Activated CD4-positive, alpha-beta T cell treated with anti-CD3 and anti-CD28 coated beads, Interleukin-2, amount 10 ng/mL, durations not matched to agents 24 days and 14 days (primary cell): ENCODE measurements at regions of chr3 and their contacts with region 1.

Region 1: DNA sequence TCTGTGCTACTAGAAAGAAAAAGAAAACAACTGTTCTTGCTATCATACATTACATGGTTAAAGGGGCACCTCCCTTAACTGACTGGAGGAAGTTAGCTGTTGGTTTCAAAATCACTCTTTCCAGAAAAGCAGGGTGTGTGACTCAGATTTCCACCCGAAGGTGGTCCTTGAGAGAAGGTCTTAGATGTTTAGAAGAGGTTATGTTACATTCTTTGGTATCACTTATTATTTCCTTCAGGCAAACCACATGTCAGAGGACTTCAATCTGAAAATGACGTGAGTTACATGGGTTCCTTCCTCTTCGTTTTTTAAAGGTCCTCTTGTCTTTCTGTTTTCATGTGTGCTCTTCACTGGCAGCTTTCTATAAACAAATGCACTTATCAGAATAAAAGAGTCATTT is 307.9 kb upstream of the CBLB start:
- DNase-seq: peak; percentile 91
- H3K4me3 Mint-ChIP-seq: peak overlapping the region; percentile 77
- H3K27ac Mint-ChIP-seq: peak overlapping the region; percentile 93
- H3K4me1 Mint-ChIP-seq: peaks cover 53% of the 10 kb centered on the region
- H3K27me3 Mint-ChIP-seq: no peaks in the 10 kb centered on the region

Region 2: DNA sequence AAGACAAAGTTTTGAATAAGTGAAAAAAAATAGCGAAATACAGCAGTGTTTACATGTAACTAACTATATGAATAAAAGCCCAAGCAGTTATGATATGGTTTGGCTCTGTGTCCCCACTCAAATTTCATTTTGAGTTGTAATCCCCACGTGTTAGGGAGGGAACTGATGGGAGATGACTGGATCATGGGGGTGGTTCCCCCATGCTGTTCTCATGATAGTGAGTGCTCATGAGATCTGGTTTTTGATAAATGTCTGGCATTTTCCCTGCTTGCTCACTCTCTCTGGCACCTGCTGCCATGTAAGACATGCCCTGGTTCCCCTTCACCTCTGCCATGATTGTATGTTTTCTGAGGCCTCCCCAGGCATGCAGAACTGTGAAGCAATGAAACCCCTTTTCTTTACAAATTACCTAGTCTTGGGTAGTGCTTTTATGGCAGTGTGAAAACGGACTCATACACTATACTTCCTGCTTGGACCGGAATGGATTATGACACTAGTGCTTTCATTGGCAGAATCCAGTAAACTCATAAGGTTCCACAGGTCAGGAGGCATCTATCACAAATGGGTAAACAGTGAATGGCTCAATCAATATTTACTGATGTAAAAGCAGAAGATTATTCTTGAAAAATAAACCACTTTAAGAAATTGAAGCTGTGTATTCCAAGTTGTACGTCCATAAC is 500.0 kb before region 1 on chr3:
- intact Hi-C with region 1: loop called (anchors 2 kb)
- DNase-seq: peak; percentile 48
- H3K4me3 Mint-ChIP-seq: no peak overlapping the region
- H3K27ac Mint-ChIP-seq: peak overlapping the region; percentile 89
- H3K4me1 Mint-ChIP-seq: peaks cover 26% of the 10 kb centered on the region
- H3K27me3 Mint-ChIP-seq: no peaks in the 10 kb centered on the region

Region 3: GRCh38 chr3:105868742-105869530 is 307.8 kb before region 1 on chr3 and contains the start of gene CBLB:
- intact Hi-C with region 1: loop called (anchors 1 kb)
- DNase-seq: peak; percentile 95
- H3K4me3 Mint-ChIP-seq: peak within 1 kb of the TSS; percentile 93
- H3K27ac Mint-ChIP-seq: peak within 1 kb of the TSS; percentile 98
- H3K4me1 Mint-ChIP-seq: peaks cover 31% of the 10 kb centered on the region
- H3K27me3 Mint-ChIP-seq: no peaks in the 10 kb centered on the region
- total RNA-seq, gene CBLB: 177 and 183 TPM in 2 replicates

Region 4: GRCh38 chr3:106034313-106034712 is 142.4 kb before region 1 on chr3:
- intact Hi-C with region 1: no loop called
- DNase-seq: no peak
- H3K4me3 Mint-ChIP-seq: no peak overlapping the region
- H3K27ac Mint-ChIP-seq: no peak overlapping the region
- H3K4me1 Mint-ChIP-seq: no peaks in the 10 kb centered on the region
- H3K27me3 Mint-ChIP-seq: no peaks in the 10 kb centered on the region

Region 5: GRCh38 chr3:106068795-106069194 is 107.9 kb before region 1 on chr3:
- intact Hi-C with region 1: loop called (anchors 2 kb)
- DNase-seq: peak; percentile 74
- H3K4me3 Mint-ChIP-seq: peak overlapping the region; percentile 4
- H3K27ac Mint-ChIP-seq: peak overlapping the region; percentile 82
- H3K4me1 Mint-ChIP-seq: peaks cover 8% of the 10 kb centered on the region
- H3K27me3 Mint-ChIP-seq: no peaks in the 10 kb centered on the region

Region 6: GRCh38 chr3:106097817-106098435 is 78.8 kb before region 1 on chr3:
- intact Hi-C with region 1: no loop called
- DNase-seq: no peak
- H3K4me3 Mint-ChIP-seq: no peak overlapping the region
- H3K27ac Mint-ChIP-seq: no peak overlapping the region
- H3K4me1 Mint-ChIP-seq: peaks cover 5% of the 10 kb centered on the region
- H3K27me3 Mint-ChIP-seq: no peaks in the 10 kb centered on the region

Region 7: DNA sequence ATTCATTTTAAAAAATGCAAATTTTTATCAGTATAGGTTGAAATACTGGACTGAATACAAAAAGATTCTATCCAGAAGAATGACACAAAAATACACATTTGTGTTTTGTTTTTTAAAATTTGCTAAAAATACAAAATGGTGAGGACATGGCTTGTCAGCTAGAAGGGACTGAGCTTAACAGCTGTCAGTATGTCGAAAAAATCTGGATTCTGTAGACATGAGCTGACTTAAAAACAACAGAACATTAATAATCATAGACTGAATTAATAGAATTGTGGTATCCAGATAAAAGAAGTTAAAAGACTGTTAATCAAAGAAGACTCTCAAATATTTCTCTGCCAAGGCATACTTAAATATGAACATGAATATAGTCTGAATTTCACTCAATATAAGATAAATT is 63.0 kb before region 1 on chr3:
- intact Hi-C with region 1: no loop called
- DNase-seq: no peak
- H3K4me3 Mint-ChIP-seq: no peak overlapping the region
- H3K27ac Mint-ChIP-seq: no peak overlapping the region
- H3K4me1 Mint-ChIP-seq: peaks cover 13% of the 10 kb centered on the region
- H3K27me3 Mint-ChIP-seq: no peaks in the 10 kb centered on the region

Region 8: DNA sequence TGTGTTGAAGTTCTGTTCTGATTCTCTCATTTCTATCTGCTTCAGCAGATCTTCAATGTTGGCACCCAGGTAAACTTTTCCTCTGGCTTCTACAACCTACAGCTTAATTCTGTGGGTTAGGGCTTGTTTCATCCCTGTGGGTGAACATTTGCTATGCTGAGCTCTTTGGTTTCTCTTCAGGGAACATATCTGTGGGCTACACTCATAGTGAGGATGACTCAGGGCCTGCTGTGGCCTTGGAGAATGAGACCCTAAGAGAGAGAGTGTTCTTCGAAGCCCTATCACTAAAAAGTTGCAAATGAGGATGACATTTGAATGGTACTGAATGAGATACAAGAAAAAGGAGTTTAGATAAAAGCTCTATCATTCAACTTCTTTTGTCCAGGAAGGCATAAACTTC is 38.3 kb after region 1 on chr3:
- intact Hi-C with region 1: loop called (anchors 2 kb)
- DNase-seq: peak; percentile 64
- H3K4me3 Mint-ChIP-seq: peak overlapping the region; percentile 3
- H3K27ac Mint-ChIP-seq: peak overlapping the region; percentile 70
- H3K4me1 Mint-ChIP-seq: peaks cover 32% of the 10 kb centered on the region
- H3K27me3 Mint-ChIP-seq: no peaks in the 10 kb centered on the region

Region 9: DNA sequence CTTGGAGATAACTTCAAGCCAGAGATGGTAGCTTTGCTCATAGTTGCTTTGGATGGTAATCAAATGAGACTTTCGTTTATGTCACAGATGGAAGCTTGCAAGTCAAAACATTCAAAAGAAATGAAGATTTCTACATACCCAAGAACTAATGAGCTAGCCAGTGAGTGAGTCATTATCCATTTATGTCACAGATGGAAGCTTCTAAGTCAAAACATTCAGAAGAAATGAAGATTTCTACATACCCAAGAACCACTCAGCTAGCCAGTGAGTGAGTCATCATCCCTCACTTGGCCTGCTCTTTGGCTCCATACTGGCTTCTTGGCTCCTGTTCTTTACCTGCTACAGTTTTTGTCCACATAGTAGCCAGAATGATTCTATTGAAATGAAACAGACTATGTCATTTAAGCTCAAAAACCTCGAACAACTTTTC is 251.8 kb after region 1 on chr3:
- intact Hi-C with region 1: loop called (anchors 1 kb)
- DNase-seq: no peak
- H3K4me3 Mint-ChIP-seq: peak overlapping the region; percentile 25
- H3K27ac Mint-ChIP-seq: peak overlapping the region; percentile 96
- H3K4me1 Mint-ChIP-seq: peaks cover 42% of the 10 kb centered on the region
- H3K27me3 Mint-ChIP-seq: no peaks in the 10 kb centered on the region